ENCODE measurements at regions of chr12 and their contacts with region 1.

Region 1: GRCh38 chr12:50763639-50764285 is at the start of gene ATF1:
- DNase-seq: peak; percentile 94
- ATAC-seq: peak; percentile 89
- H3K4me3 Mint-ChIP-seq: peak within 1 kb of the TSS; percentile 95
- H3K27ac Mint-ChIP-seq: peak within 1 kb of the TSS; percentile 97
- H3K4me1 Mint-ChIP-seq: peaks cover 38% of the 10 kb centered on the region
- H3K27me3 Mint-ChIP-seq: no peaks in the 10 kb centered on the region
- total RNA-seq, gene ATF1: 53.0 to 67.3 TPM

Region 2: GRCh38 chr12:50084775-50085614 is 678.8 kb before region 1 on chr12 and contains the start of gene SMARCD1:
- CTCF ChIA-PET with region 1: no interaction called
- POLR2A ChIA-PET with region 1: no interaction called
- intact Hi-C with region 1: loop called in 1 of 2 experiments (anchors 1 kb)
- DNase-seq: peak; percentile 91
- ATAC-seq: peak; percentile 90
- H3K4me3 Mint-ChIP-seq: peak within 1 kb of the TSS; percentile 85
- H3K27ac Mint-ChIP-seq: peak within 1 kb of the TSS; percentile 96
- H3K4me1 Mint-ChIP-seq: peaks cover 36% of the 10 kb centered on the region
- H3K27me3 Mint-ChIP-seq: no peaks in the 10 kb centered on the region
- total RNA-seq, gene SMARCD1: 51.8 to 76.6 TPM

Region 3: GRCh38 chr12:50400598-50401364 is 363.0 kb before region 1 on chr12 and contains the start of gene LARP4:
- CTCF ChIA-PET with region 1: no interaction called
- POLR2A ChIA-PET with region 1: no interaction called
- intact Hi-C with region 1: loop called in 1 of 2 experiments (anchors 1 kb)
- DNase-seq: peak; percentile 95
- ATAC-seq: peak; percentile 97
- H3K4me3 Mint-ChIP-seq: peak within 1 kb of the TSS; percentile 93
- H3K27ac Mint-ChIP-seq: peak within 1 kb of the TSS; percentile 94
- H3K4me1 Mint-ChIP-seq: peaks cover 13% of the 10 kb centered on the region
- H3K27me3 Mint-ChIP-seq: no peaks in the 10 kb centered on the region
- total RNA-seq, gene LARP4: 66.3 to 72.4 TPM

Region 4: GRCh38 chr12:50825372-50825838 is 61.6 kb after region 1 on chr12:
- CTCF ChIA-PET with region 1: interaction called, 3 read pairs
- POLR2A ChIA-PET with region 1: interaction called, 3 read pairs
- intact Hi-C with region 1: loop called (anchors 1 to 2 kb)
- DNase-seq: no peak
- ATAC-seq: peak; percentile 61
- H3K4me3 Mint-ChIP-seq: no peak overlapping the region
- H3K27ac Mint-ChIP-seq: peak overlapping the region; percentile 35
- H3K4me1 Mint-ChIP-seq: peaks cover 6% of the 10 kb centered on the region
- H3K27me3 Mint-ChIP-seq: no peaks in the 10 kb centered on the region

Region 5: DNA sequence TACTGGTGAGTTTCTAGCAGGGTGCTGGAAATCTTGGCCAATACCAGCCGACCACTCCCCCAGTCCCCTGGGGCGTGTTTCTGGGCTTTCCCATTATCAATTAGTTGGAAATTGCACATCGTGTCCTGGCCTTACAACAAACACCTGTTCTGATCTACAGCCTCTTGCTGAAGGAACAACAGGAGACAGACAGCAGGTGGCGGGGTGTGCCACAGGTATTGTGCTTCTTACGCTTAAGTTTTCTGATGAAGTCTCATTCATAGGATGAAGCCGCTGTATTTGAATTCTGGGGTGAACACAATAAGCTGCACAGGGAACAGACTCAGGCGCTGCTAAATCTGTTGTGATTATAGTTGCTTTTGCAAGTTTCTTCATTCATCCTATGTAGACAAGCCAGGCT is 189.3 kb after region 1 on chr12:
- CTCF ChIA-PET with region 1: no interaction called
- POLR2A ChIA-PET with region 1: no interaction called
- intact Hi-C with region 1: no loop called
- DNase-seq: peak; percentile 31
- ATAC-seq: no peak
- H3K4me3 Mint-ChIP-seq: no peak overlapping the region
- H3K27ac Mint-ChIP-seq: no peak overlapping the region
- H3K4me1 Mint-ChIP-seq: no peaks in the 10 kb centered on the region
- H3K27me3 Mint-ChIP-seq: no peaks in the 10 kb centered on the region

Region 6: DNA sequence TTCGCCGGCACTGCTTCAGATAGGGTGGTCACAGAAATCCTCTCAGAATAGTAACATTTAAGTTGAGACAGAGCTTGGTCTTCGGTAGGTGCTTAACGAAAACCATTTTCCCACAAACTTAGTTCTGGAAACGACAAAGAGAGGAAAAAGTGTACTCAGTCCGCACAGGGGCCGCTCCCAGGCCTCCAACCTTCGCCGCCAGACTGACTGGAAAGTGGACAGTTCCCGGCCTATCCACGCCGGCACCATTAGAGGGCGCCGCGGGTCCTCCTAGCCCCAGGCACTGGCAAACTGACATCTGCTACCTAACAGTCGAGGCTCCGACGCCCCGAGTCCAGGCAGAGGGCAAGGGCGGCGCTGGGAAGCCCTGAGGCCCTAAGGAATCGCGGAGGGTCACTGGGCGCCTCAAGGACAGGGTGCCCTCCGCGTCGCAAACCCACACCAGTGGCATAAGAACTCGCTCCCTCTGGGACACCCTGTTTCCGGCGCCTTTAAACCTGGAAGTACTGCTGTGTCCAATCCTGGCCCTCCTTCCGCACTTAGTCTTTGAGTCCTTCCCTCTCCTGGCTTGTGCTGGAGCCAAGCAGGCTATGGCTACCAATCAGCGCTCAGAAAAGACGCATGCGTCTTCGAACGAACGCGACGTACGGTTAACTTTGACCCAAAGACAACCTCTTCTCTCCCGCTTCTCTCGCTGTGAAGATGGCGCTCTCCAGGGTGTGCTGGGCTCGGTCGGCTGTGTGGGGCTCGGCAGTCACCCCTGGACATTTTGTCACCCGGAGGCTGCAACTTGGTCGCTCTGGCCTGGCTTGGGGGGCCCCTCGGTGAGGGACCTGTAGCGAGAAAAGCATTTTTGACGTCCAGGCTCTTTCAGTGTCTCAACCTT is 284.1 kb after region 1 on chr12 and contains the start of gene LETMD1:
- CTCF ChIA-PET with region 1: no interaction called
- POLR2A ChIA-PET with region 1: no interaction called
- intact Hi-C with region 1: loop called in 1 of 2 experiments (anchors 1 kb)
- DNase-seq: peak; percentile 94
- ATAC-seq: peak; percentile 98
- H3K4me3 Mint-ChIP-seq: peak within 1 kb of the TSS; percentile 92
- H3K27ac Mint-ChIP-seq: peak within 1 kb of the TSS; percentile 92
- H3K4me1 Mint-ChIP-seq: peaks cover 23% of the 10 kb centered on the region
- H3K27me3 Mint-ChIP-seq: no peaks in the 10 kb centered on the region
- total RNA-seq, gene LETMD1: 69.6 to 79.6 TPM

Region 7: GRCh38 chr12:51217968-51218606 is 454.3 kb after region 1 on chr12 and contains the start of gene POU6F1:
- CTCF ChIA-PET with region 1: no interaction called
- POLR2A ChIA-PET with region 1: no interaction called
- intact Hi-C with region 1: loop called in 1 of 2 experiments (anchors 1 kb)
- DNase-seq: peak; percentile 80
- ATAC-seq: peak; percentile 80
- H3K4me3 Mint-ChIP-seq: peak within 1 kb of the TSS; percentile 91
- H3K27ac Mint-ChIP-seq: peak within 1 kb of the TSS; percentile 95
- H3K4me1 Mint-ChIP-seq: peaks cover 17% of the 10 kb centered on the region
- H3K27me3 Mint-ChIP-seq: no peaks in the 10 kb centered on the region
- total RNA-seq, gene POU6F1: 8.7 to 12.9 TPM

Region 8: DNA sequence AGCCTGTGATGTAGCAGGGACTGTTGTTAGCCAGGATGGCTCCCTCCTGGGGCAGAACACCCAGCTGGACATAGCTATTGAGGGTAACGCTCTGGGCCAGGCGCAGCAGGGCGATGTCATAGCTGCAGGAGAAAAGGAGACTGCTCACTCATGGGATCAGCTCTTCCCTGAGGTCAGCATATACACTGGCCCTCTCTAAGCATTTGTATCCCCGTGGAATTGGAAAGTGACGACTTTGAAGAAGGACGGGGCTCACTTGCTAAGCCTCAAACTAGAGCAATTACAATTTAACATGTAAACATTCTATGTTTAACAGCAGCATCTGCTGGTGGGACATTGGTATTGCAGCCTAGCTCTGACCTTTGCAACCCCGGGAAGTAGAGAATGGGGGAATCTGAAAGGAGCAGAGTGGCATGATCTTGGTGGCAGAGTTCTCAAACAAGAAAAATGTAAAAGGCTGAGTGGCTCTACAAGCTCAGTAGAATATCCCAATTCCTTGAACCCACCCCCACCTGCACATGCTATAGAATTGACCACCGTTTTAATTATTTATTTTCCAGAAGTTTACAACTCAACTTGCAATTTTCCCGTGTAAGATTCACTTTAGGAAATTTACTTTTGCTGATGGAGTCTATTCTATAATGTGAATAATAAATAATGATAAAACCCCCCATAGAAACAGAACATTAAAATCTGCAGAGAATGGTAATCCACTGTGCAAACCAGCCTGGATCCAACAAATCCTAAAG is 577.7 kb after region 1 on chr12:
- CTCF ChIA-PET with region 1: interaction called, 3 read pairs
- POLR2A ChIA-PET with region 1: no interaction called
- intact Hi-C with region 1: loop called in 1 of 2 experiments (anchors 5 kb)
- DNase-seq: peak; percentile 80
- ATAC-seq: peak; percentile 78
- H3K4me3 Mint-ChIP-seq: no peak overlapping the region
- H3K27ac Mint-ChIP-seq: peak overlapping the region; percentile 32
- H3K4me1 Mint-ChIP-seq: peaks cover 22% of the 10 kb centered on the region
- H3K27me3 Mint-ChIP-seq: no peaks in the 10 kb centered on the region

Region 9: GRCh38 chr12:52759695-52760094 is 1995.9 kb after region 1 on chr12:
- CTCF ChIA-PET with region 1: no interaction called
- POLR2A ChIA-PET with region 1: no interaction called
- intact Hi-C with region 1: no loop called
- DNase-seq: no peak
- ATAC-seq: no peak
- H3K4me3 Mint-ChIP-seq: no peak overlapping the region
- H3K27ac Mint-ChIP-seq: no peak overlapping the region
- H3K4me1 Mint-ChIP-seq: no peaks in the 10 kb centered on the region
- H3K27me3 Mint-ChIP-seq: no peaks in the 10 kb centered on the region

Measured in activated CD4-positive, alpha-beta T cell treated with anti-CD3 and anti-CD28 coated beads for 36 hours (primary cell).